ENCODE measurements at regions of chr10 and their contacts with region 1.

Region 1: GRCh38 chr10:50896721-50897120 is 11.3 kb upstream of the A1CF start:
- DNase-seq: no peak
- ATAC-seq: no peak
- H3K4me3 Mint-ChIP-seq: no peak overlapping the region
- H3K27ac Mint-ChIP-seq: no peak overlapping the region
- H3K4me1 Mint-ChIP-seq: no peaks in the 10 kb centered on the region
- H3K27me3 Mint-ChIP-seq: peaks cover 15% of the 10 kb centered on the region

Region 2: DNA sequence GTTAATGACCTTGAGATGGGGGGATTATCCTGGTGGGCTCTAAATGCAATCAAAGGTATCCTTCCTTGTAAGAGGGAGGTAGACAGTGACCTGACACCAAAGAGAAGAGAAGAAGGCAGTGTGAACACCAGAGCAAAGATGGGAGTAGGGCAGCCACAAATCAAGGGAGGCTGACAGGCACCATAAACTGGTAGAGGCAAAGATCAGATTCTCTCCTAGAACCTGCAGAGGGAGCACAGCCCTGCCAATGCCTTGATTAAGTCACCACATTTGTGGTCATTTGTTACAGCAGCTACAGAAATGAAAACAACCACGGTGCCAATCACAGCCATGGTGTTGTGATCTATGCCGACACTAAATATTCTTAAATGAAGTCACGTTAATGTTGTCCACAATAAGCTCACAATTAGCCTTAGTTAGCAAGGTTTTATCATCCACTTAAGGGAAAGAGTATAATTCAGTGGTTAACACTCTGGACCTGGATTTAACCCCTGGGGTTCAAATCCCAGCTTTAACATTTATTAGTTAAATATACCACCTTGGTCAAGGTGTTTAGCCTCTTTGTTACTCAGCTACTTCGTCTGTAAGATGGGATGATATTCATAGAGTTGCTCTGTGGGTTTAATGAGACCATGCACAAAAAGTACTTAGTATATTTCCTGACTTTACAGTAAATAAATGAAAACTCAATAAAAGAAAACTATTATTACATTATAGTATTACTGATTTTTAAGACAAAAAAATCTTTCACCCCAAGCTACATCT is 343.8 kb before region 1 on chr10:
- CTCF ChIA-PET with region 1: no interaction called
- POLR2A ChIA-PET with region 1: no interaction called
- intact Hi-C with region 1: loop called in 1 of 2 experiments (anchors 10 kb)
- DNase-seq: peak; percentile 44
- ATAC-seq: peak; percentile 79
- H3K4me3 Mint-ChIP-seq: no peak overlapping the region
- H3K27ac Mint-ChIP-seq: no peak overlapping the region
- H3K4me1 Mint-ChIP-seq: peaks cover 18% of the 10 kb centered on the region
- H3K27me3 Mint-ChIP-seq: no peaks in the 10 kb centered on the region

Region 3: DNA sequence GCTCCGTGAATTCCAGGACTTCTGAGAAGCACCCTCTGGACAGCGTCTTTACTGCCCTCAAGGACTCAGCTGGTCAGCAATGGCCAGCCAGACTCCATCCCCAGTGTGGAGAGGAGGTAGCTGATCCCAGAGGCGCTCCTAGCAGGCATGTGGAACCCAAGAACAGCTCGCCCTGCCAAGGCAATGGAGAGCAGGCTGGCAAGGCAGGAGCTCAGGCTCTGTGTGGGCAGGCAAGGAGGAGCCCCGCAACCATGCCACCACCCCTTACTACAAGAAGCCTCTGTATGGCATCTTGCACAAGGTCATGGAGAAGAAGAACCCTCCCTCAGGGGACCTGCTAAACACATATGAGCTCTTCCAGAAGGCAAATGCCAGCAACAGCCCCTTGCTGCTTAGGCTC is 238.6 kb before region 1 on chr10:
- CTCF ChIA-PET with region 1: no interaction called
- POLR2A ChIA-PET with region 1: no interaction called
- intact Hi-C with region 1: loop called in 1 of 2 experiments (anchors 1 kb)
- DNase-seq: no peak
- ATAC-seq: no peak
- H3K4me3 Mint-ChIP-seq: peak overlapping the region; percentile 15
- H3K27ac Mint-ChIP-seq: no peak overlapping the region
- H3K4me1 Mint-ChIP-seq: peaks cover 29% of the 10 kb centered on the region
- H3K27me3 Mint-ChIP-seq: no peaks in the 10 kb centered on the region

Region 4: GRCh38 chr10:50982989-50983388 is 86.3 kb after region 1 on chr10:
- CTCF ChIA-PET with region 1: no interaction called
- POLR2A ChIA-PET with region 1: no interaction called
- intact Hi-C with region 1: no loop called
- DNase-seq: no peak
- ATAC-seq: no peak
- H3K4me3 Mint-ChIP-seq: no peak overlapping the region
- H3K27ac Mint-ChIP-seq: no peak overlapping the region
- H3K4me1 Mint-ChIP-seq: no peaks in the 10 kb centered on the region
- H3K27me3 Mint-ChIP-seq: peaks cover 12% of the 10 kb centered on the region

Measured in activated CD4-positive, alpha-beta T cell treated with anti-CD3 and anti-CD28 coated beads for 36 hours (primary cell).